ENCODE measurements at regions of chr10 and their contacts with region 1.

Region 1: GRCh38 chr10:26334932-26335573 is 103.1 kb upstream of the APBB1IP start:
- DNase-seq: peak; percentile 63 to 75 (median 73)
- H3K4me3 ChIP-seq: peak overlapping the region; percentile 51 to 89 (median 70)
- H3K4me3 Mint-ChIP-seq: peak overlapping the region; percentile 84 to 90
- H3K27ac ChIP-seq: peak overlapping the region in 1 of 2 donors; percentile 68
- H3K27ac Mint-ChIP-seq: peak overlapping the region in 6 of 7 donors; percentile 7 to 90 (median 80)
- H3K4me1 ChIP-seq: peaks cover 19 to 22% of the 10 kb centered on the region in 2 donors
- H3K4me1 Mint-ChIP-seq: peaks cover 15% of the 10 kb centered on the region
- H3K27me3 ChIP-seq: no peaks in the 10 kb centered on the region
- H3K27me3 Mint-ChIP-seq: peaks cover 0 to 2% (median 1%) of the 10 kb centered on the region in 3 donors
- CTCF ChIP-seq: peak; percentile 95

Region 2: DNA sequence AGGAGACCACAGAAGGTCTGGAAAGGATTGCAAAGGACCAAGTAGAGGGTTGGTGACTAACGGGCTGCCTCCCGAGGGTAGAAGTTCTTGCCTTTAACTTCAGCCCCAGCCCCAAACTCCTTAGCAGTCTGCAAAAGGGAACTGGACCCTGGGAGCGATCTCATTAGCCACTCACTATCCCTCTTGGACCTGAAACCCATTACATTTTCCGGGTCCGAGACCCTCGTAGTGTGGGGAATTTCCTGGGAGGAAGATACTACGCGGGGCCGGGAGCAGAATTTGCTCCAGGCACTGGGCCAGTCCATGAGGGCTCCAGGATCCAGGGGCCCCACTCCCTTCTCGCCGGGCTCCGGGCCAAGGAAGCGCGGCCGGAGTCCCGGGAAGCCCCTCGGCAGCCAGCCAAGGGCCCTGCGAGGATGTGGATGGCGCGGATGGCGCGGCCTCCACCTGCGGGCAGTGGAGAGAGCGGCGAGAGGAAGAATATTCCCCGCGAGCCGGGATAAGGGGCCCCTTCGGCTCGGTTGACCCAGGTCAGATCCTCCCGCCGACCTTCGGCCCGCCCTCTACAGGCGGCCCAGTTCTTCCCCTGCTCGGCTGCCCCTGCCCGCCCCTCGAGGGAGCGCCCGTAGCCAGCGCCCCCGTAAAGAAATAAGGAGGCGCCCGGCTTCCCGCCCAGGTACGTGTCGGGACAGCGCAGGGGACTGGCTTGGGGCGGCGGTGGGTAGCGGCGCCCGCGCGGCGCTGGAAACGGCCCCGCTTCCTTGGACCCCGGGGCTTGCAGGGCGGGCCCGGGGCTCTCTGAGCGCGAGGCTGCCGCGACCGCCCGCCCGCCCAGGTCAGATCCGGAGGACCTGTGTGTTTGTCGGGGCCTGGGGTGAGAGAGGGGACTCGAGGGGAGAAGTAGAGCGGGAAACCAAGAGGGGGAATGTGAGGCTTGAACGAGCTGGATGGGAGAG is 401.1 kb before region 1 on chr10 and contains the start of gene MYO3A:
- intact Hi-C with region 1: no loop called
- DNase-seq: no peak
- H3K4me3 ChIP-seq: no peak within 1 kb of the TSS
- H3K4me3 Mint-ChIP-seq: peak within 1 kb of the TSS; percentile 52 to 90
- H3K27ac ChIP-seq: no peak within 1 kb of the TSS
- H3K27ac Mint-ChIP-seq: no peak within 1 kb of the TSS
- H3K4me1 ChIP-seq: no peaks in the 10 kb centered on the region
- H3K4me1 Mint-ChIP-seq: peaks cover 7% of the 10 kb centered on the region
- H3K27me3 ChIP-seq: peaks cover 31 to 60% of the 10 kb centered on the region in 2 donors
- H3K27me3 Mint-ChIP-seq: peaks cover 43 to 66% (median 44%) of the 10 kb centered on the region in 3 donors
- CTCF ChIP-seq: no peak
- polyA plus RNA-seq, gene MYO3A: not detected

Region 3: GRCh38 chr10:26067680-26068079 is 267.4 kb before region 1 on chr10:
- intact Hi-C with region 1: no loop called
- DNase-seq: no peak
- H3K4me3 ChIP-seq: no peak overlapping the region
- H3K4me3 Mint-ChIP-seq: no peak overlapping the region
- H3K27ac ChIP-seq: no peak overlapping the region
- H3K27ac Mint-ChIP-seq: no peak overlapping the region
- H3K4me1 ChIP-seq: no peaks in the 10 kb centered on the region
- H3K4me1 Mint-ChIP-seq: peaks cover 4% of the 10 kb centered on the region
- H3K27me3 ChIP-seq: no peaks in the 10 kb centered on the region
- H3K27me3 Mint-ChIP-seq: no peaks in the 10 kb centered on the region
- CTCF ChIP-seq: no peak

Region 4: GRCh38 chr10:26725837-26726727 is 391.0 kb after region 1 on chr10:
- intact Hi-C with region 1: loop called in 1 of 2 experiments (anchors 10 kb)
- DNase-seq: peak; percentile 39 to 59 (median 48)
- H3K4me3 ChIP-seq: no peak overlapping the region
- H3K4me3 Mint-ChIP-seq: no peak overlapping the region
- H3K27ac ChIP-seq: no peak overlapping the region
- H3K27ac Mint-ChIP-seq: peak overlapping the region in 3 of 7 donors; percentile 50 to 82 (median 51)
- H3K4me1 ChIP-seq: no peaks in the 10 kb centered on the region
- H3K4me1 Mint-ChIP-seq: peaks cover 5% of the 10 kb centered on the region
- H3K27me3 ChIP-seq: no peaks in the 10 kb centered on the region
- H3K27me3 Mint-ChIP-seq: no peaks in the 10 kb centered on the region
- CTCF ChIP-seq: peak; percentile 90